ENCODE measurements at regions of chr1 and their contacts with region 1.

Region 1: DNA sequence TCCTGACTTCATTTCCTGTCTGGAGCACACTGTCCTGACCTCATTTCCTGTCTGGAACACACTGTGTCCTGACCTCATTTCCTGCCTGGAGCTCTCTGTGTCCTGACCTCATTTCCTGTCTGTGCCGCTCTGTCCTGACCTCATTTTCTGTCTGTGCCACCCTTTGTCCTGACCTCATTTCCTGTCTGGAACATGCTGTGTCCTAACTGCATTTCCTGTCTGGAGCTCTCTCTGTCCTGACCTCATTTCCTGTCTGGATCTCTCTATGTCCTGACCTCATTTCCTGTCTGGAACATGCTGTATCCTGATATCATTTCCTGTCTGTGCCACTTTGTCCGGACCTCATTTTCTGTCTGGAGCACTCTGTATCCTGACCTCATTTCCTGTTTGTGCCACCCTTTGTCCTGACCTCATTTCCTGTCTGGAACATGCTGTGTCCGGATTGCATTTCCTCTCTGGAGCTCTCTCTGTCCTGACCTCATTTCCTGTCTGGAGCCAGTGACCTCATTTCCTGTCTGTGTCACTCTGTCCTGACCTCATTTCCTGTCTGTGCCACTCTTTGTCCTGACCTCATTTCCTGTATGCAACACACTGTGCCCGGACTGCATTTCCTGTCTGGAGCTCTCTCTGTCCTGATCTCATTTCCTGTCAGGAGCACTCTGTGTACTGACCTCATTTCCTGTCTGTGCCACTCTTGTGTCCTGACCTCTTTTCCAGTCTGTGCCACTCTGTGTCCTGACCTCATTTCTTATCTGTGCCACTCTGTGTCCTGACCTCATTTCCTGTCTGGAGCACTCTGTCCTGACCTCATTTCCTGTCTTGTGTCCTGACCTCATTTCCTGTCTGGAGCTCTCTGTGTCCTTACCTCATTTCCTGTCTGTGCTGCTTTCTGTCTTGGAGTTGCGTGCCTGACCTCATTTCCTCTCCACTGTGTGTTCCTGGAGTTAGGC is 27.6 kb downstream of the SKI start:
- DNase-seq: peak; percentile 95 to 99 (median 95)
- H3K4me3 ChIP-seq: no peak overlapping the region
- H3K4me3 Mint-ChIP-seq: no peak overlapping the region
- H3K27ac ChIP-seq: peak overlapping the region; percentile 52 to 92
- H3K27ac Mint-ChIP-seq: no peak overlapping the region
- H3K4me1 ChIP-seq: peaks cover 0 to 28% of the 10 kb centered on the region in 2 donors
- H3K4me1 Mint-ChIP-seq: peaks cover 28% of the 10 kb centered on the region
- H3K27me3 ChIP-seq: no peaks in the 10 kb centered on the region
- H3K27me3 Mint-ChIP-seq: peaks cover 0 to 5% (median 1%) of the 10 kb centered on the region in 3 donors
- CTCF ChIP-seq: no peak

Region 2: DNA sequence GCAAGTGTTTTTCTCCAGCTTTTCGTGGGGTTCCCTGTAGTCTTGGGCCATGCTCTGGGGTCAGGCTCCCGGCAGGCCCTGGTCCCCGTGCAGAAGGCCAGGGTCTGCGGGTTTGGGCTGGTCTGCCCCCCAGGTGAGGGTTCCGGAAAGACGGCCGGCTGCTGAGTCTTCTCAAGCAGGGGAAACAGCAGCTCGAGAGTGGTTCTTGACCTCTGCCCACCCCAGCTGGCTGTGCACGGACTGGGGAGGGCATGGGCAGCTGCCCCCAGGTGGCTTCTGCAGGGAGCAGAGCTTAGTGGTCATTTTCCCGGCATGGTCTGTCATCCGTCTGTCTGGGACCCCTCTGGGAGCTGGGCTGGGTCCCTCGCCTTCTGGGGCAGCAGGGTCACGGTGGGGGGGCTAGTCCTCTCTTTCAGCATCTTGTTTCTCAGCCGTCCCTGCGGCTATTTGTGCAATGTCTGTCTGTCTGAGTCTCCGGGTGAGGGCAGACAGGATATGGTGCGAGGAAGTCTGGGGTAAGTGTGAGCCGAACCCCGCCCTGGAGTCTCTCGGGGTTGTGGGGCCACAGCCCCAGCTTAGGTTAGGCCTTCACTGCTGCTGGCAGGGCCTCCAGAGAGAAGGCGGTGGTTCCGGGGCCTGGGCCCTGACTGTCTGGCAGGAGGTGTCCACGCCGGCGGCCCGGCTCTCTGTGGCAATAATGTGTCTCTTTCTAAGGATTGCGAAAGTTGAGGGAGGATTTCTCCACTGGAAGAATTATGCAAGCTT is 21.5 kb before region 1 on chr1:
- intact Hi-C with region 1: loop called in 1 of 2 experiments (anchors 2 kb)
- DNase-seq: peak; percentile 97 to 99 (median 98)
- H3K4me3 ChIP-seq: peak overlapping the region in 2 of 3 experiments; percentile 22 to 80
- H3K4me3 Mint-ChIP-seq: peak overlapping the region; percentile 83 to 100
- H3K27ac ChIP-seq: peak overlapping the region; percentile 83 to 90
- H3K27ac Mint-ChIP-seq: peak overlapping the region; percentile 90 to 95 (median 94)
- H3K4me1 ChIP-seq: peaks cover 88 to 98% of the 10 kb centered on the region in 2 donors
- H3K4me1 Mint-ChIP-seq: peaks cover 85% of the 10 kb centered on the region
- H3K27me3 ChIP-seq: no peaks in the 10 kb centered on the region
- H3K27me3 Mint-ChIP-seq: peaks cover under 1 to 16% (median 2%) of the 10 kb centered on the region in 3 donors
- CTCF ChIP-seq: no peak

Region 3: GRCh38 chr1:2266301-2266975 is 10.7 kb after region 1 on chr1:
- intact Hi-C with region 1: loop called in 1 of 2 experiments (anchors 1 kb)
- DNase-seq: no peak
- H3K4me3 ChIP-seq: no peak overlapping the region
- H3K4me3 Mint-ChIP-seq: no peak overlapping the region
- H3K27ac ChIP-seq: no peak overlapping the region
- H3K27ac Mint-ChIP-seq: no peak overlapping the region
- H3K4me1 ChIP-seq: peaks cover 4 to 15% of the 10 kb centered on the region in 2 donors
- H3K4me1 Mint-ChIP-seq: peaks cover 25% of the 10 kb centered on the region
- H3K27me3 ChIP-seq: no peaks in the 10 kb centered on the region
- H3K27me3 Mint-ChIP-seq: no peaks in the 10 kb centered on the region
- CTCF ChIP-seq: no peak

Region 4: DNA sequence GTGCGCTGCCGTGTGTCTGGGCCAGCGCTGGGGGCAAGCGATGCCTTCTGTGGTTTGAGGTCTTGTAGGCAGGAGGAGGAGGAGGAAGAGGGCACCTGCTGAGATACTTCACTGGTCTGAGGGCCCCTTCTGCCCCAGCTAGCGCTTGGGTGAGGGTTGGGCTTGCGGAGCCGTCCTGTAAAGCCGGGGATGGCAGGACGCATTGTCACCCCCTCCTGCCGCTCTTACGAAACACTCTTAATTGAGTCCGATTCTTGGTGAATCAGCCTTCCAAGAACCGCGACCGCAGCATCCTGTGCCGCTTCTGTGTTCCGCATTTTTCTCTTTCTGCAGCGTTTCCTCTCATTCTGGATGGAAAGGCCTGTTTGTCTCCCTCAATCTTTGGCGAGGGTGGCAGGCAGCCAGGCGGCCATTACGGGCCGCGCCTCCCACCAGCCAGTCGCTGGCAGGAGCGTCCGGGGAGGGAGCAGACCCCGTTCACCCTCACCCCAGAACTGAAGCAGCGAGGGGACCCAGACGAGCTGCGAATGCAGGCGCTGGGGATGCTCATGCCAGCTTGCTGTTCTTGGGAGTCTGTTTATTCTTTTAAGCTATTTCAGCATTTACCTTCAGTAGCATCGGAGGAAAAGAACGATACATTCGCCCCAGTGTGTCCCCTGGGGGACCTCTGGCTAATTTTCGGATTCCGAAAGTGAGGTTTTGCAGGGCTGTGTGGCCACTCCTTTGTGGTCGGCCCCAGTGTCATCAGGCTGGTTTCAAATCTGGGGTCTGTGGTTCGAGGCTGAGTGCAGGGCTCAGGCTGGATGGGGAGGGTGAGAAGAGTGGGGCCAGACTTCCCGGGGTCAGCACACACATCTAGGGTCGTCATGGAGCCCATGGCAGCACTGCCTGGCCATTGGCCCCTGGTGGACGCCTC is 35.2 kb after region 1 on chr1:
- intact Hi-C with region 1: loop called (anchors 2 to 5 kb)
- DNase-seq: peak; percentile 96 to 99 (median 98)
- H3K4me3 ChIP-seq: peak overlapping the region in 2 of 3 experiments; percentile 2 to 68
- H3K4me3 Mint-ChIP-seq: peak overlapping the region; percentile 72 to 87
- H3K27ac ChIP-seq: peak overlapping the region in 1 of 2 donors; percentile 43
- H3K27ac Mint-ChIP-seq: peak overlapping the region; percentile 82 to 92 (median 88)
- H3K4me1 ChIP-seq: peaks cover 42 to 63% of the 10 kb centered on the region in 2 donors
- H3K4me1 Mint-ChIP-seq: peaks cover 55% of the 10 kb centered on the region
- H3K27me3 ChIP-seq: peaks cover 0 to 60% of the 10 kb centered on the region in 2 donors
- H3K27me3 Mint-ChIP-seq: peaks cover 63 to 82% (median 68%) of the 10 kb centered on the region in 3 donors
- CTCF ChIP-seq: no peak

Region 5: DNA sequence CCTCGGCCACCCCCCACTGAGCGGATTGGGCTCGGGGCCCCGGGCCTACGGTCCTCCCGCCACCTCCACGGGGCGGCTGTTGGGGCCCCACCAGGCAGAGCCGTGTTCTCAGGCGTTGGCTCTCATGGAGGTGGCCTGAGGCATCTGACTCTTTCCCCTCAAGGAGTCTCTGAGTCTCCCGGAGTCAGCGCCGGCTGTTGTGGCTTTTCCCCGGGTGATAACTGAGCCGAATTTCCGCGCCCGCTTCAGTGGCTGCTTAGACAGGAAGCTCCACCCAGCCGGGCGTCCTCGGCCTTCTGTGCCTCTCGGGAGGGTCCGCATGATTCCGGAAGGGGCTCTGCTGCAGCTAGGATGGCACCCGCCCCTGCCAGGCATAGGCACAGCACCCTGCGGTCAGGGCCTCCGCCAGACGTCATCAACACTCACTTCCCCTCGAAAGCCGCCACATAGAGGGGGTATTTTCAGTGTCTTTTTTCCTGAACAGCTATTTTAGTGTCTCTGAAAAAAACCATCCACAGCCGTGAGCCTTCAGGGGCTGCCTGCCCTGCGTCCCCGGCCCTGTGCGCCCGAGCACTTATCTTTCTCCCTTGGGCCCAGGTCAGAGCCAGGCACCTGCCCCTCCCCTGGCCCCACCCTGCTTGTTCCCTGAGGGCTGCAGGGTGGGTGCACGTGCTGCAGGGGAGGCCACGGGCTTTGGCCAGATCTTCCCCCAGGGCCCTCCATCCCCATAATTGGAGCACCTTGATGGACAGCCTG is 45.3 kb after region 1 on chr1:
- intact Hi-C with region 1: loop called in 1 of 2 experiments (anchors 2 kb)
- DNase-seq: peak; percentile 94 to 96 (median 95)
- H3K4me3 ChIP-seq: peak overlapping the region; percentile 8 to 65 (median 50)
- H3K4me3 Mint-ChIP-seq: peak overlapping the region; percentile 74 to 85
- H3K27ac ChIP-seq: peak overlapping the region; percentile 68 to 81
- H3K27ac Mint-ChIP-seq: peak overlapping the region; percentile 75 to 94 (median 91)
- H3K4me1 ChIP-seq: peaks cover 33 to 51% of the 10 kb centered on the region in 2 donors
- H3K4me1 Mint-ChIP-seq: peaks cover 40% of the 10 kb centered on the region
- H3K27me3 ChIP-seq: peaks cover 0 to 19% of the 10 kb centered on the region in 2 donors
- H3K27me3 Mint-ChIP-seq: peaks cover 22 to 38% (median 32%) of the 10 kb centered on the region in 3 donors
- CTCF ChIP-seq: no peak

Region 6: GRCh38 chr1:2314803-2315673 is 59.3 kb after region 1 on chr1:
- intact Hi-C with region 1: loop called in 1 of 2 experiments (anchors 2 kb)
- DNase-seq: peak in 1 of 3 donors; percentile 33
- H3K4me3 ChIP-seq: peak overlapping the region in 1 of 3 experiments; percentile 37
- H3K4me3 Mint-ChIP-seq: peak overlapping the region in 1 of 2 donors; percentile 35
- H3K27ac ChIP-seq: no peak overlapping the region
- H3K27ac Mint-ChIP-seq: peak overlapping the region in 1 of 7 donors; percentile 11
- H3K4me1 ChIP-seq: peaks cover 15 to 23% of the 10 kb centered on the region in 2 donors
- H3K4me1 Mint-ChIP-seq: peaks cover 4% of the 10 kb centered on the region
- H3K27me3 ChIP-seq: peaks cover 5 to 43% of the 10 kb centered on the region in 2 donors
- H3K27me3 Mint-ChIP-seq: peaks cover 12 to 56% (median 25%) of the 10 kb centered on the region in 3 donors
- CTCF ChIP-seq: peak; percentile 99

Region 7: DNA sequence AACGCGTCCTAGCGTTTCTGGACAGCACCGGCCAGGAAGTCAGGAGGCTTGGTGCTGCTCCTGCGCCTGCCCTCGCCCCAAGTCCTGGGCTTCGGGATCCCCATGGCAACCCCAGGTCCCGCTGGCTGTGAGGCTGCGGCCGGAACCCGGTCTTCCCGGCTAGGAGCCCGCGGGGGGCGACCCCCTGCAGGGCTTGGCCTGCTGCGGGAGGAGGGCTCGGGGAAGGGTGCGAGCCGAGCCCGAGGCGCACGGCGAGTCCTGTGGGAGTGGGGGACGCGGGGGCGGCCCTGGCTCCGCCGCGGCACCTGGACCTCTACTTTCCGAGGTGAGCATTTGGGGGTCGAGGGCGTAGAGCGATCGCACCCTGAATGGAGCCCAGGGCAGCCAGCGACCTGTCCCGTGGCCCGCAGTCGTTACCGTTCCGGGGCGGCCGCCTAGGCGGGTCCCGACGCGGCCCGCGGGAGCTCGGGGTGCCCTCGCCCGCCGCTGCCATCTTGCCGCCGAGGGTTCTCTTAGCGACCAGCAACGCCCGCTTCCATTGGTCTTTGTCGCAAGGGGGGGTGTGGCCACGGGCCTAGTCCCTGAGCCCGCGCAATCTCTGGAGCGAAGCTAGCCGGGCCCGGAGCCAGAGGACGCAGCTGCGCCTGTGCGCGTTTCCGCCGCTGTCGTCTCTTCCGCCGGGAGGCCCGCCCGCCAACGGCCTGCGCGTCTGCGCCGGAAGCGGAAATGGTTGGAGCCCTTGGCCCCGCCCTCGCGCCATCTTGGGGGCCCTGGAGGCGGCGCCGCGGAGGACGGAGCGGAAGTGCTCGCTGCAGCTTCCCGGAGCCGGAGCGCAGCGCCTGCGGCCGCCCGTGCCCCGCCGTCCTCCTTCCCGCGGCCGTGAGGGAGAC is 135.6 kb after region 1 on chr1 and contains the starts of genes MORN1 and RER1:
- intact Hi-C with region 1: loop called in 1 of 2 experiments (anchors 5 kb)
- DNase-seq: peak; percentile 99 to 100 (median 99)
- H3K4me3 ChIP-seq: peak within 1 kb of the TSS; percentile 50 to 94 (median 78)
- H3K4me3 Mint-ChIP-seq: peak within 1 kb of the TSS; percentile 81 to 90
- H3K27ac ChIP-seq: peak within 1 kb of the TSS in 1 of 2 donors; percentile 79
- H3K27ac Mint-ChIP-seq: peak within 1 kb of the TSS; percentile 57 to 89 (median 85)
- H3K4me1 ChIP-seq: peaks cover 14 to 26% of the 10 kb centered on the region in 2 donors
- H3K4me1 Mint-ChIP-seq: peaks cover 30% of the 10 kb centered on the region
- H3K27me3 ChIP-seq: no peaks in the 10 kb centered on the region
- H3K27me3 Mint-ChIP-seq: no peaks in the 10 kb centered on the region
- CTCF ChIP-seq: no peak
- polyA plus RNA-seq, gene MORN1: 1.5 to 3.0 (median 1.7) TPM
- polyA plus RNA-seq, gene RER1: 98.3 to 235 (median 193) TPM

Measured in CD14-positive monocyte (primary cell).